ENCODE measurements at regions of chr14 and their contacts with region 1.

Region 1: DNA sequence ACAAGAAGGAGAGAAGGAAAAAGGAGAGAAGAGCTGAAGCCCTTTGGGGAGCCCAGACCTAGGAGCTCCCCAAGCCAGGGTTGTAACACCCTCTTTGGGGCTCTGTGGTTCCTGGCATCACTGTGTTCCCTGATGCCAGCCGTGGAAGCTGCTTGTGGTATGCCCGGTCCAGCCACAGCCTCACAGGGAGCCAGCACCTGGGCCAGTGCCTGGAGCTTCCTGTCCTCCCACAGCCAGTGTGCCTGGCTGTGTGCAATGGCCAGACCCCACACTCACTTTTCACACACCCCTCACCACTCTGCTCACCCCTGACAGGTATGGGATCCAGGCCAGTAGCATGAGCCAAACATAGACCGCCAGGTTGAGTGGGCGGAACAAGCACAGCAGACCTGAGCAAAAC is 834.7 kb downstream of the FLRT2 start:
- DNase-seq: no peak

Region 2: GRCh38 chr14:85483037-85483436 is 881.6 kb before region 1 on chr14:
- intact Hi-C with region 1: no loop called
- DNase-seq: no peak

Region 3: DNA sequence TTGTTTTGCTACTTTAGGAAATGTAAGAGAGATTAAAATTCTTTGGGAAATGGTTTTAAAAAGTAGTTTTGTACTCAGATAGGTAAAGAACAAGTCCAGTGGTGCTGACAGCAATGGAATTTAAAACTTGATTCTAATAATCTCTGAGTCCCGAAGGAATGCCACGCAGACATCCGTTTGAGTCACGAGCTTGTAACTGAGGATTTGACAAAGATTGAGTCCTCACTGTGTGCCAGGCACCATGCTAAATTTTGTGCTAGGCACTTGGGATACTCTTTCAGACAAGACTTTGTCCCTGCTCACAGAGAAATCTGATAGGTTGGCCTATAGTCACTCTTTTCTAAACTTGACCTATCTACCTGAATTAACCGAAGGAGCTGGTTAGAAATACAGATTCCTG is 822.0 kb before region 1 on chr14:
- intact Hi-C with region 1: loop called in 1 of 2 experiments (anchors 5 kb)
- DNase-seq: no peak

Region 4: DNA sequence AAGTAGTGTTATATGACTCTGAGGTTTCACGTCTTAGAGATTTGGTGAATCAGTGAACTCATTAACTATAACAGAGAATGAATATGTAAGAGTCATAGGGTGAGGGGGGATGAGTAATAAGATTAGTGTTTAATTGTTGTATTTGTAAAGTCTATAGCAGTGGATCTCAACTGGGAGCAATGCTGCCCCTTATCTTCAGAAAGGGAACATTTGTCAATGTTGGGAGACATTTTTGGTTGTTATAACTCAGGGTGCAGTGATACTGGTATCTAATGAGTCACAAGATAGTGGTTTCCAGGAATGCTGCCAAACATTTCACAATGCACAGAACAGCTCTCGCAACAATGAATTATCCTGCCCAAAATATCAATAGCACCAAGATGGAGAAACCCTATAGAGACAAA is 434.6 kb after region 1 on chr14:
- intact Hi-C with region 1: no loop called
- DNase-seq: no peak

Measured in posterior vena cava (tissue), 2 donors.